Heart left ventricle (tissue), 16 donors: ENCODE measurements at regions of chr5 and their contacts with region 1.

Region 1: GRCh38 chr5:36690041-36690961 is 83.9 kb downstream of the SLC1A3 start:
- DNase-seq: peak; percentile 71 to 91 (median 84)
- ATAC-seq: peak; percentile 66 to 81 (median 73)
- H3K4me3 ChIP-seq: peak overlapping the region; percentile 24 to 74 (median 56)
- H3K27ac ChIP-seq: peak overlapping the region; percentile 23 to 84 (median 73)
- H3K4me1 ChIP-seq: peaks cover 0 to 60% (median 25%) of the 10 kb centered on the region in 12 donors
- H3K27me3 ChIP-seq: no peaks in the 10 kb centered on the region
- CTCF ChIP-seq: peak; percentile 59 to 88 (median 74)
- POLR2A ChIP-seq: peak in 1 of 2 donors; percentile 21

Region 2: DNA sequence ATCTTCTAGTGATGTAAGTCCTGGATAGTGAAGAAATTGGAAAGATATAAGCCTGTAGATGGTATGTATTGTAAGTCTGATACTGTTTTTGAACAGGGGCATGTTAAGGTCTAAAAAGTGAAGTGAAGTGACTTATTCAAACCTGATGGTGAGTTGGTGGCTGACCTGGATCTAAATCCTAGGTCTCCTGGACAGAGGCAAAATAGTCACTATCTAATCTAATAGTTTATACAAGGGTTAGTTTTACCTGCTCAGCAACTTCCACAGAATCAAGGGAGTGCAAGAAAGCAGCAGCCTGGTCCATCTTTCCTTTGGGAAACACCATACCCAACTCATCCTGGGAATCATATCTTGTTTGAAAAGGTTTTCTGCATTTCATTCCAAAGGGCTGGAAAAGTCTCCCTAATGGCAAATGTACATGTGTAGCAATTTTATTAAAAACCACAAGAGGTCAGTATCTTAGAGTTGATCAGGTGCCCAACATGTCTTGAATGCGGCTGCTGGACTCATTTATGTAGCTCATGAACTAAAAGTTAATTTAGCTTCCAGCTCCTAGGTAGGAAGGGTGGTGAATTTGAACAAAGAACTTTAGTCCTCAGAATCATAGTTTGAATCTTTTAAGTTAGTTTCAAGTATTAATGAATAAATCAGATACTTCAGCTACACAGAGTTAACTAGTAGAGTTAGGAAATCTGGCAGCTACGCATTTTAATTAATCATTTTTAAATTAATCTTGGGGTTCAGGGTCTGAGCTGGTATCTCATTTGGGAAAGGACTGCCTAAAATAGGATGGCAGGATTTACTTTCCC is 512.4 kb before region 1 on chr5:
- intact Hi-C with region 1: loop called in 1 of 10 experiments (anchors 10 kb)
- DNase-seq: no peak
- ATAC-seq: peak in 1 of 4 donors; percentile 60
- H3K4me3 ChIP-seq: no peak overlapping the region
- H3K27ac ChIP-seq: no peak overlapping the region
- H3K4me1 ChIP-seq: no peaks in the 10 kb centered on the region
- H3K27me3 ChIP-seq: no peaks in the 10 kb centered on the region
- CTCF ChIP-seq: peak; percentile 33 to 68 (median 50)
- POLR2A ChIP-seq: no peak

Region 3: GRCh38 chr5:36270220-36270574 is 420.1 kb before region 1 on chr5:
- intact Hi-C with region 1: loop called in 5 of 10 experiments (anchors 5 to 10 kb)
- DNase-seq: no peak
- ATAC-seq: no peak
- H3K4me3 ChIP-seq: no peak overlapping the region
- H3K27ac ChIP-seq: no peak overlapping the region
- H3K4me1 ChIP-seq: peaks cover 0 to 12% (median 0%) of the 10 kb centered on the region in 12 donors
- H3K27me3 ChIP-seq: no peaks in the 10 kb centered on the region
- CTCF ChIP-seq: no peak
- POLR2A ChIP-seq: no peak

Region 4: DNA sequence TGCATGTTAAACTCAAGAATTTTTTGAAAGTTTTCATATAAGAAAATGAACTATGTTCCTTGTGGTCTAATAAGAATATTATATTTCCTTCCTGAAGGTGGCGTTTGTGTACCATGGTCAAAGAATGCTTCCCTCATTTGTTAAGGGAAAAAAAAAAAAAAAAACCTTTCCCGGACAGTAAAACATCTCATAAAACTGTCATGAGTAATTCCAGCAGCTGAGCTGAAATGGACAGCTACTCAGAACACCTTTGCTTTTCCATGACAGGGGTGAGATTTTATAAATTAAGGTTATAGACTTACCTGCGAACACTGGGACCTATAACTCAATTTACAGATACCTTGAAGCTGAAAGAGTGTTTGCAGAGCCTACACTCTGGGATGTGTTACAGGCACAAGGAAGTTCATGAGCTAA is 275.4 kb before region 1 on chr5:
- intact Hi-C with region 1: loop called in 9 of 10 experiments (anchors 1 to 2 kb)
- DNase-seq: no peak
- ATAC-seq: peak in 3 of 4 donors; percentile 41 to 65 (median 49)
- H3K4me3 ChIP-seq: no peak overlapping the region
- H3K27ac ChIP-seq: peak overlapping the region in 1 of 12 donors; percentile 25
- H3K4me1 ChIP-seq: peaks cover 0 to 18% (median 0%) of the 10 kb centered on the region in 12 donors
- H3K27me3 ChIP-seq: no peaks in the 10 kb centered on the region
- CTCF ChIP-seq: peak; percentile 25 to 66 (median 53)
- POLR2A ChIP-seq: no peak

Region 5: DNA sequence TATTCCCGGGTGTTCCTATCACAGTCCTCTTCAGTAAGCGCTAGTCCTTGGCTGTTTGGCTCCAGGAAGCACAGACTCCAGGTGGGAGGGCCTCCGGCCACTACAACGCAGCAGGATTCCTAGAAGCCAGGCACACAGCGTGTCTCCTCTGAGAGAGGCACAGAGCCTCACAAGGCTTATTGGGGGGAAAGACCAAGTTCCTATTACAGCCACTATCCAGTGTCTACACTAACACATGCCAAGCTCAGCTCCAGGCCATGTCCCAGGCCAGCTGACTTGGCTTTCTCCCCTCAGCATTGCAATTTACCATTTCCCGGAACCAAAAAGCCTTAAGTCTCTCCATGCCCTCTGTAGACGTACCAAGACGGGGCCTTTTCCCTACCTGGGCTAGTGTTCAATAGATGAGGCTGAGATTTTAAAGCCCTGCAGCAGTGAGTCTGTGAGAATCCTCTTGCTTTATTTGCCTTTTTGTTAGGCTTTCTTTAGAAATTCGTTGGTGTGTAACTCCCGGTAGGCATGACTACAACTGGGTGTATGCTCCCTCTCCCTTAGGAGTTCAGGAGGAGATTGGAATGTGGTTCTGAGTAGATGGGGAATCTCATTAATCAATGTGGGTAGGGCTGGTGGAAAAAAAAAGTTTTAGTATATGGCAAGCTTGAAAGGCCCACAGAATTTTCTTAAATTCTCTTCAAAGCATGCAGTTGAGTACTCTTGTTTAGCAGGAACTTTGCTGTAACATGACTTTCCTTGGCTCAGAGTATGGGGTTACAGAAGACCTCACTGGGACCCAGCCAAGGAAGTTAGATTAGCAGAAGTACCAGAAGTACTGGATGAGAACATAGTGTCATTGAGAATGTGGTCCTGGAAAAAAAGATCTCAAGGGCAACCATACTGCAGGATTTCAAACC is 168.2 kb before region 1 on chr5:
- intact Hi-C with region 1: loop called in 1 of 10 experiments (anchors 10 kb)
- DNase-seq: peak in 4 of 5 donors; percentile 28 to 48 (median 41)
- ATAC-seq: peak; percentile 92 to 95 (median 93)
- H3K4me3 ChIP-seq: no peak overlapping the region
- H3K27ac ChIP-seq: peak overlapping the region in 11 of 12 donors; percentile 57 to 92 (median 76)
- H3K4me1 ChIP-seq: peaks cover 0 to 26% (median 7%) of the 10 kb centered on the region in 12 donors
- H3K27me3 ChIP-seq: no peaks in the 10 kb centered on the region
- CTCF ChIP-seq: no peak
- POLR2A ChIP-seq: no peak

Region 6: GRCh38 chr5:36739751-36740221 is 49.5 kb after region 1 on chr5:
- intact Hi-C with region 1: no loop called
- DNase-seq: peak; percentile 18 to 66 (median 43)
- ATAC-seq: peak; percentile 15 to 53 (median 45)
- H3K4me3 ChIP-seq: no peak overlapping the region
- H3K27ac ChIP-seq: no peak overlapping the region
- H3K4me1 ChIP-seq: peaks cover 0 to 17% (median 5%) of the 10 kb centered on the region in 12 donors
- H3K27me3 ChIP-seq: peaks cover 0 to 24% (median 0%) of the 10 kb centered on the region in 9 donors
- CTCF ChIP-seq: peak; percentile 46 to 74 (median 66)
- POLR2A ChIP-seq: no peak

Region 7: DNA sequence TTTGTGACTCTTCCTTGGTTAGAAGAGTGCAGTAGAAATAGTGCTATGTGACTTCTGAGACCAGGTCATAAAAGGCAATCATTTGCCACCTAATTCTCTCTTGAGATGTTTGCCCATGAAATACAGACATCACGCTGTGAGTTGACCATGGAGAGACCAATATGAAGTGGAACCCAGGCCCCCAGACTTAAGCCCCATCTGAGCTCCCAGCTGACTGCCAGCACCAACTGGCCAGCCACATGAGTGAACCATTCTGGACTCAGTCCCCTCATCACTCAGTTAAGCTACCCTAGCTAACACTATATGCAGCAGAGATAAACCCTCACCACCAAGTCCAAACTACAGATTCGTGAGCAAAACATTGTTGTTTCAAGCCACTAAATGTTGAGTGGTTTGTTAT is 125.6 kb after region 1 on chr5:
- intact Hi-C with region 1: no loop called
- DNase-seq: no peak
- ATAC-seq: no peak
- H3K4me3 ChIP-seq: no peak overlapping the region
- H3K27ac ChIP-seq: no peak overlapping the region
- H3K4me1 ChIP-seq: no peaks in the 10 kb centered on the region
- H3K27me3 ChIP-seq: no peaks in the 10 kb centered on the region
- CTCF ChIP-seq: no peak
- POLR2A ChIP-seq: no peak